Right ventricle myocardium inferior (tissue), 1 donor: ENCODE measurements at regions of chr3 and their contacts with region 1.

Region 1: GRCh38 chr3:177777699-177778098 is 580.4 kb upstream of the TBL1XR1 start:
- DNase-seq: peak; percentile 43
- ATAC-seq: no peak

Region 2: GRCh38 chr3:177041021-177041729 is 736.5 kb before region 1 on chr3:
- intact Hi-C with region 1: loop called (anchors 10 kb)
- DNase-seq: no peak
- ATAC-seq: peak; percentile 93

Region 3: GRCh38 chr3:177724020-177724638 is 53.6 kb before region 1 on chr3:
- intact Hi-C with region 1: loop called (anchors 5 kb)
- DNase-seq: peak; percentile 82
- ATAC-seq: peak; percentile 96

Region 4: GRCh38 chr3:178172121-178172520 is 394.4 kb after region 1 on chr3:
- intact Hi-C with region 1: no loop called
- DNase-seq: no peak
- ATAC-seq: no peak

Region 5: DNA sequence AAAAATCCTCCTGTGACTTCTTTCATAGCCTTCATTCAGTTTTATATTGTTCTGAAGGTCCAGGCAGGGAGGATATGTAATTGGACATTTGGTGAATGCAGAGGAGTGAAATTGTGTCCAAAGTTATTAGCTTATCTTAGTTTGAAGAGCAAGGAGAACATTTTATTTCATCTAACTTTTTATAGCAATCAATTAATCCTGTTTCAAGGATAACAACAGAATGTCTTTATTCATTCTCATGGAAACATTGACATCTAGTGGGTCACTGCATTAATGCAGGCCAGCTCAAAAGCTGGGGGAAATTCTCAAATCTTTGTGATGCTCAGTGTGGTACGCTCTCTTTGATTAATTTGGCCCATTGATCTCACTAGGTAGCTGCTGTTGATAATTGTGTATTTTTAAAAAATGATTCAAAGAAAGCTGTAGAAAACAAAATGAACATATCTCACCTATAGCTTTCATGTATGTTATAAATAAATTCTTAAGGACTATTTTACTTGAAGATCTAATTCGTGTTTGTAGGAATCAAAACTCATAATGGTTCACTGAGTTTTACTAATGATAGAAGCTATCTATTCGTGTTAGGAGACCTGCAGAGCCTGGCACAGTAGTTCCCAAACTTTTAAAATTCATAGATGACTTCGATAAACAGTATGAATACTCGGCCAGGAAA is 607.7 kb after region 1 on chr3:
- intact Hi-C with region 1: loop called (anchors 5 kb)
- DNase-seq: no peak
- ATAC-seq: peak; percentile 86